Activated naive CD4-positive, alpha-beta T cell treated with anti-CD3 and anti-CD28 coated beads for 36 hours (primary cell): ENCODE measurements at regions of chr10 and their contacts with region 1.

Region 1: DNA sequence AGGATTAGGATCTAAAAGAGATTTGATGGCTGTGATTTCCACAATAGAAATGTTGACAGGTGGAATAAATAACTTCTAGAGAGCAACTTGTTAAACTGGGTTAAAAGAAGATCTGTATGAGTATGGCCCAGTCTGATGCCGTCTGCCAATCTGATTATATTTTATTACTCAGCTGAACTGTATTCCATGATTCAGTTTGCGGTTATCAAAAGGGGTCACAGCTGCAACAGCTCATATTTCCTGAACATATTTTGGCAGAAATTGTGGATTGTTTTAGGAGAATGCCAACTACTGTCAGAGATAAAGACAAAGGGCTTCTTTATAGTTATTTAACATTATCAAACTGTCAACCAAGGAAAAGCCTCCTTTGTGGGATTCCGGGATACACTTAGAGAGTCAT is 244.8 kb upstream of the MINDY3 start:
- DNase-seq: no peak
- H3K4me3 Mint-ChIP-seq: no peak overlapping the region
- H3K27ac Mint-ChIP-seq: no peak overlapping the region
- H3K4me1 Mint-ChIP-seq: no peaks in the 10 kb centered on the region
- H3K27me3 Mint-ChIP-seq: no peaks in the 10 kb centered on the region

Region 2: GRCh38 chr10:16182688-16183087 is 77.6 kb after region 1 on chr10:
- CTCF ChIA-PET with region 1: no interaction called
- intact Hi-C with region 1: no loop called
- DNase-seq: no peak
- H3K4me3 Mint-ChIP-seq: no peak overlapping the region
- H3K27ac Mint-ChIP-seq: no peak overlapping the region
- H3K4me1 Mint-ChIP-seq: no peaks in the 10 kb centered on the region
- H3K27me3 Mint-ChIP-seq: peaks cover 8% of the 10 kb centered on the region

Region 3: GRCh38 chr10:16271571-16271970 is 166.5 kb after region 1 on chr10:
- CTCF ChIA-PET with region 1: interaction called, 13 read pairs
- intact Hi-C with region 1: no loop called
- DNase-seq: no peak
- H3K4me3 Mint-ChIP-seq: no peak overlapping the region
- H3K27ac Mint-ChIP-seq: no peak overlapping the region
- H3K4me1 Mint-ChIP-seq: no peaks in the 10 kb centered on the region
- H3K27me3 Mint-ChIP-seq: peaks cover 7% of the 10 kb centered on the region

Region 4: DNA sequence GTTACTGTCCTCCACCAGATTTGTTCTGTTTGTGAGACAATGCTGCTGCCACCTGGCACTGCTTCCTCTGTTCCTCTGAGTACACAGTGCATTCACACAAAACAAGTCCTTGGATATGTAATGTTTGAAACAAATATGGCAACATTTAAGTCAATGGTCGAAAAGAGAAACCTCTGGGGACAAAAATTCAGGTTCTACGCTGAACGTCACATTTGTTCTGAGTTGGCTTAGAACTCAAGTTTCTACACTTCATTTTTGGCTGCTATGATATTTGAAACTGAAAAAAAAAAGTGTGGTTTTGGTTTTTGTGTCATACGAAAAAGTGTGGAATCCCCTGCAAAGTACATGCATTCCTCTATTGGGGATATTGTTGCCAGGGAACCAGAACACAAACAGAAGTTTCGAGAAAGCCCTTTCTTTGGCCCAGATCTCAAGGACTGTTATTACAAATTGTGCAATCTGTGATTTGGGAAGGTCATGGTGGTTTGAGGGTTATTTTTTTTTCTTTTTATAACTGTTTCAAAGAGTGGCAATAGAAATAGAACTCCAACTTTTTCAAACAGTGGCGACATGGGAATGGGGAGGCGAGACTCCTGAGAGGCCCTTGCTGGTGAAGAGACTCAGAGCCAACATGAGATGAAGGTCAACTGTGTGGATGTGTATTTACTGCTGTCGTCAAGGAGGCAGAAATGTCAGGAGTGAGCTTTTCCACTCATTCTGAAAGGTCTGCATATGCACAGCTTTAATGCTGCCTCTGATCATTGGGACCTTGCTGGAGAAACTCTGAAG is 897.1 kb after region 1 on chr10:
- CTCF ChIA-PET with region 1: no interaction called
- intact Hi-C with region 1: no loop called
- DNase-seq: peak; percentile 44
- H3K4me3 Mint-ChIP-seq: no peak overlapping the region
- H3K27ac Mint-ChIP-seq: peak overlapping the region; percentile 5
- H3K4me1 Mint-ChIP-seq: peaks cover 57% of the 10 kb centered on the region
- H3K27me3 Mint-ChIP-seq: peaks cover 5% of the 10 kb centered on the region